ENCODE measurements at regions of chr22 and their contacts with region 1.

Region 1: DNA sequence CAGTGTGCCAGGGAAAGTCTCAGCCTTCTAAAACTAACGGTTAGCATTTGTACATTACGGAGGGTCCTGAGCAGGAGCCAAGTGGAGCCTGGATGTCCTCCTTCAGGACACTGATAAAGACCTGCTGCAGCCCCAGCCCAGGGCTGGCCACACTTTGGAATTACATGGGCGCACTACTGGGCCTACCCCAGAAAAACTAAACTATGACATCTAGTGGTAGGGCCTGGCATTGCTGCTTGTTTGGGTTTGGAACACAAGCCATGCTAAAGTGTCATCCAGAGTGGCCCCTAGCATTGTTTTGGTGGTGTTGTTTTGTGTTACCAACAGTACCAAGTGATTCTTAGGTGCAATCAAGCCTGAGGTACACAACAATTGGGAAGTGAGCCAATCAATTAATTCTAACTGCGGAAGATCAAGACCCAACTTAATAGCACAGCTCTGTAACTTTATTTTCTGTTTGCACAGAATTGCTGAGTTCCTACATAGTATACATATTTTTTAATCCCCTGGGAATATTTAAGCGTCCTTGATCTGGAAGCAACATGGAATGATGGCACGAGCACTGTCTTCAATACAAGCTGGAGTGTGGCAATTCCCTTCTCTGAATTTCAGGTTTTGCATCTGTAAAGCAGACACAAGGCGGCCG is 340.7 kb downstream of the LARGE1 start:
- DNase-seq: peak; percentile 17
- H3K4me3 Mint-ChIP-seq: no peak overlapping the region
- H3K27ac Mint-ChIP-seq: no peak overlapping the region
- H3K4me1 Mint-ChIP-seq: no peaks in the 10 kb centered on the region
- H3K27me3 Mint-ChIP-seq: no peaks in the 10 kb centered on the region

Region 2: GRCh38 chr22:33049119-33049729 is 530.3 kb before region 1 on chr22:
- intact Hi-C with region 1: no loop called
- DNase-seq: peak; percentile 18
- H3K4me3 Mint-ChIP-seq: no peak overlapping the region
- H3K27ac Mint-ChIP-seq: no peak overlapping the region
- H3K4me1 Mint-ChIP-seq: no peaks in the 10 kb centered on the region
- H3K27me3 Mint-ChIP-seq: peaks cover 18% of the 10 kb centered on the region

Region 3: DNA sequence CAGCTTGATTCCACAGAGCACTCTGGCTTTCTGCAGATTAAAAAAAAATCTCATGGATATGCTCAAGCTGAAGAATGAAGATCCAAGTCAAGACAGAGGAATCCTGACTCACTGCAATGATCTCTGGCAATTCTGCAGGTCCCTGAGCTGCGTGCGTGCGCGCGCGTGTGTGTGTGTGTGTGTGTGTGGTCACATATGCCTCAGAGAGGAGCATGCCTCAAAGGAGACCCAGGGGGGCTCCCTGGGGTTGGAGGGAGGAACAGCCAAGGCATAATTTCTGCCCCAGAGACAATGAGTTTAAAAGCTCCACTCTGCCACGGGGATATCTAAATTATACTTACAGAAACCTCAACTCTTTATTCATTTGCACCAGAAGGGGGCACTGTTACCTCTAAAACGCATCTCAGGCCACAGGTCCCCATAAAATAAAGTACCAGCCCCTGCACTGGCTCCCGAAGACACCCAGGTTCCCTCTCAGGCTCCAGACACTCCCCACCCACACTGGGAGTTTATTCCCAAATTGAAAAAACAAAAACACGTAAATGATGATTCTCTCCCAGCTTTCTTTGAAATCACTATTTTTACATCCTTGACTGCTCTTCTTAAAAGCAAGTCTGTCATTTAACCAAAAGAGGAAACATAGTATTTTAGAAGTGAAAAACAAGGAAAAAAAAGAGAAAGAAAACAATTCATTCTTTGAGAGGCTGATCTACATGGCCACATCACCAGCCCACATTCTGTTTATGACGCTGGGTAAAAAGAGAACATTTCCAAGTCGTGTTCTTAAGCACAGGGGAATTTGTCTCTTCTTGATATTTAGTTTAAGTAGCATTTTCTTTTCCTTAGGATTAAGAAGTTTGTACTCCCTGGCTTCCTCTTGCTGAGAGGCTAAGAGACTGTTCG is 60.2 kb before region 1 on chr22:
- intact Hi-C with region 1: loop called (anchors 1 kb)
- DNase-seq: no peak
- H3K4me3 Mint-ChIP-seq: no peak overlapping the region
- H3K27ac Mint-ChIP-seq: no peak overlapping the region
- H3K4me1 Mint-ChIP-seq: no peaks in the 10 kb centered on the region
- H3K27me3 Mint-ChIP-seq: no peaks in the 10 kb centered on the region